Caco-2 (cell line): ENCODE measurements at regions of chr12 and their contacts with region 1.

Region 1: DNA sequence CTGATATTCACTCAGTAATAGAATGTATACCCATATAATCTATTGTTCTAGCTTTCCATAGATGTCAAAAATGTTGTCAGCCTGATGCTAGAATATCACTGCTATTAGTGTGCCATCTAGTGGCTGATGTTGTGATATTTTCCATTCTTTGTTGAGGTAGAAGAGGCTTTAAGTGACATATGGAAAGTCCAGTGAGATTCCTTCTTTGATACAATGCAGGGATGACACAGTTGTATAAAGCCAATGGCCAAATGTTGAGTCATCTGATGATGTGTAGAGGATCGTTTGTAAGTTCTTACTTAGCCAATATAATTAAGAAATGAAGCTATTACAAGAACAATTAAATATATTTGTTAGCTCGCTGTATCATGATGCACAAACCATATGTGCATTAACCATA is 58.1 kb upstream of the PCED1B start:
- DNase-seq: peak in 1 of 2 experiments; percentile 74
- H3K4me3 ChIP-seq: no peak overlapping the region
- H3K4me3 Mint-ChIP-seq: no peak overlapping the region
- H3K27ac Mint-ChIP-seq: no peak overlapping the region
- H3K4me1 ChIP-seq: peaks cover 17% of the 10 kb centered on the region
- H3K4me1 Mint-ChIP-seq: peaks cover 22% of the 10 kb centered on the region
- H3K27me3 ChIP-seq: no peaks in the 10 kb centered on the region
- H3K27me3 Mint-ChIP-seq: peaks cover 2% of the 10 kb centered on the region
- CTCF ChIP-seq: peak; percentile 65 to 73

Region 2: DNA sequence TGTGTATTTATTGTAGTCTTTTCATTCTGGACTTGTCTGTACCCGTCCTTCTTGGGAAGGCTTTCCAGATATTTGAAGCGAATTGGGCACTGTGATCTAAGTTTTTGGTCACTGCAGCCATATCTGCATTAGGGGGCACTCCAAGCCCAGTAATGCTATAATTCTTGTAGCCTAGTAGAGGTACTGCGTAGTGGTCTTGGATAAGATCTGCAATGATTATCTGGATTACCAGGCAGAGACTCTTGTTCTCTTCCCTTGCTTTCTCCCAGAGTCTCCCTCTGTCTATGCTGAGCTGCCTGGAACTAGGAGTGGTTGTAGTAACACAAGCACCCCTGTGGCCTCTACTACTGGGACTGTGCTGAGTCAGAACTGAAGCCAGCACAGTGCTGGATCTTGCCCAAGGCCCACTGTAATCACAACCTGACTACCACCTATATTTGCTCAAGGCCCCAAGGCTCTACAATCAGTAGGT is 678.7 kb before region 1 on chr12:
- CTCF ChIA-PET with region 1: no interaction called
- POLR2A ChIA-PET with region 1: no interaction called
- intact Hi-C with region 1: loop called (anchors 1 kb)
- DNase-seq: peak; percentile 41 to 63
- H3K4me3 ChIP-seq: no peak overlapping the region
- H3K4me3 Mint-ChIP-seq: no peak overlapping the region
- H3K27ac Mint-ChIP-seq: no peak overlapping the region
- H3K4me1 ChIP-seq: no peaks in the 10 kb centered on the region
- H3K4me1 Mint-ChIP-seq: no peaks in the 10 kb centered on the region
- H3K27me3 ChIP-seq: no peaks in the 10 kb centered on the region
- H3K27me3 Mint-ChIP-seq: peaks cover 5% of the 10 kb centered on the region
- CTCF ChIP-seq: peak; percentile 60 to 71

Region 3: GRCh38 chr12:46364777-46365580 is 656.3 kb before region 1 on chr12:
- CTCF ChIA-PET with region 1: no interaction called
- POLR2A ChIA-PET with region 1: no interaction called
- intact Hi-C with region 1: loop called (anchors 5 kb)
- DNase-seq: no peak
- H3K4me3 ChIP-seq: no peak overlapping the region
- H3K4me3 Mint-ChIP-seq: no peak overlapping the region
- H3K27ac Mint-ChIP-seq: no peak overlapping the region
- H3K4me1 ChIP-seq: peaks cover 34% of the 10 kb centered on the region
- H3K4me1 Mint-ChIP-seq: peaks cover 15% of the 10 kb centered on the region
- H3K27me3 ChIP-seq: no peaks in the 10 kb centered on the region
- H3K27me3 Mint-ChIP-seq: no peaks in the 10 kb centered on the region
- CTCF ChIP-seq: no peak

Region 4: GRCh38 chr12:46944088-46944487 is 77.2 kb before region 1 on chr12:
- CTCF ChIA-PET with region 1: interaction called, 6 read pairs
- POLR2A ChIA-PET with region 1: no interaction called
- intact Hi-C with region 1: loop called (anchors 1 kb)
- DNase-seq: peak in 1 of 2 experiments; percentile 37
- H3K4me3 ChIP-seq: no peak overlapping the region
- H3K4me3 Mint-ChIP-seq: no peak overlapping the region
- H3K27ac Mint-ChIP-seq: no peak overlapping the region
- H3K4me1 ChIP-seq: peaks cover under 1% of the 10 kb centered on the region; the same call in 1 of the 2 replicates
- H3K4me1 Mint-ChIP-seq: peaks cover 7% of the 10 kb centered on the region
- H3K27me3 ChIP-seq: no peaks in the 10 kb centered on the region
- H3K27me3 Mint-ChIP-seq: no peaks in the 10 kb centered on the region
- CTCF ChIP-seq: peak; percentile 36 to 55